ENCODE measurements at regions of chr4 and their contacts with region 1.

Region 1: DNA sequence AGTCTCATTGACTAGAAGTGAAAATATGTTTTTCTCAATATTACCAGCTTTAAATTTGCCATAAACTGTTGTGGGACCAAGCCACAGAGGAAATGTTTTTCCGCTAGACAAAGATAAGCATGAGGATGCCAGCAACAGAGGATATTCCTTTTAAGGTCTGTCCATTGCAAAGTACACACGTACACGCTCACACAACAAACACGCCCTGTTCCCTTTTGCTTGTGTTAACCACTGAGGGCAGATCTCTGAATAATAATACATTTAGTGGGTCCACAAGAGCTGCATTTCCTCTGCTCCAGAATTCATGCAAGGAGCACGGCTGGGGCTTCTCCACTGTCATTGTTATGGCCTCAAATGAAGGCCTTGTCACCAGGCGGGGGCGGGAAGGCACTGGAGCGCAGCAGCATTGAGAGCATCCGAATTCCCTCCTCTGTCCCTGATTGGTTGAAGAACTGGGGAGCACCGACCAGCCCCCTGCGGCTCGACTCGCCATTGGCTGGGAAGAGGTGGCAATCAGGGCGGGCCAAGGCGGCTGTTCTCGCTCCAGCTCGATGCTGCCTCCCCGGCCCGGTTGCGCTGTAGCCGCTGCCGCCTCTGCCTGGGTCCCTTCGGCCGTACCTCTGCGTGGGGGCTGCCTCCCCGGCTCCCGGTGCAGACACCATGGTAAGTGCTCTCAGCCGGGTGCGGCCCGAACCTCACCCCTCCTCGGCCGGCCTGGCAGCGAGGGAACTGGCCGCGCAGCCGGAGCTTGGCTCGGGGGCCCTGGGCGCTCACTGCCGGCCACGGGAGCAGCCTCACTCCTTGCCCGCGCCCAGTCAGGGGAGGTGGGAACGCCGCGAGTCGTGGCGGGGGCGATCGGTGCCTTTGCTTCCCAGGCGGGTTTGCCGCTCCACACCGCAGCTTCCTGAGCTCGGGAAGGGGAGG is at the start of gene GUCY1B1:
- DNase-seq: peak; percentile 44
- ATAC-seq: peak; percentile 96
- H3K4me3 ChIP-seq: 0 out of 2 replicates have a peak within 1 kb of the TSS, but pooled peaks have one; percentile 44
- H3K27ac ChIP-seq: no peak within 1 kb of the TSS
- H3K4me1 ChIP-seq: no peaks in the 10 kb centered on the region
- H3K27me3 ChIP-seq: peaks cover 0 to 7% of the 10 kb centered on the region in 2 experiments; a peak in 2 of 4 replicates
- CTCF ChIP-seq: peak; percentile 13 to 40 (median 24); a peak in 4 of 6 replicates
- EP300 ChIP-seq: 0 out of 4 replicates have a peak, but pooled peaks of 1 of the 2 experiments have one; percentile 13
- POLR2A ChIP-seq: peak; percentile 61; the same call in 1 of the 2 replicates
- RAD21 ChIP-seq: no peak
- polyA plus RNA-seq, gene GUCY1B1: 0.60 to 1.1 TPM

Region 2: DNA sequence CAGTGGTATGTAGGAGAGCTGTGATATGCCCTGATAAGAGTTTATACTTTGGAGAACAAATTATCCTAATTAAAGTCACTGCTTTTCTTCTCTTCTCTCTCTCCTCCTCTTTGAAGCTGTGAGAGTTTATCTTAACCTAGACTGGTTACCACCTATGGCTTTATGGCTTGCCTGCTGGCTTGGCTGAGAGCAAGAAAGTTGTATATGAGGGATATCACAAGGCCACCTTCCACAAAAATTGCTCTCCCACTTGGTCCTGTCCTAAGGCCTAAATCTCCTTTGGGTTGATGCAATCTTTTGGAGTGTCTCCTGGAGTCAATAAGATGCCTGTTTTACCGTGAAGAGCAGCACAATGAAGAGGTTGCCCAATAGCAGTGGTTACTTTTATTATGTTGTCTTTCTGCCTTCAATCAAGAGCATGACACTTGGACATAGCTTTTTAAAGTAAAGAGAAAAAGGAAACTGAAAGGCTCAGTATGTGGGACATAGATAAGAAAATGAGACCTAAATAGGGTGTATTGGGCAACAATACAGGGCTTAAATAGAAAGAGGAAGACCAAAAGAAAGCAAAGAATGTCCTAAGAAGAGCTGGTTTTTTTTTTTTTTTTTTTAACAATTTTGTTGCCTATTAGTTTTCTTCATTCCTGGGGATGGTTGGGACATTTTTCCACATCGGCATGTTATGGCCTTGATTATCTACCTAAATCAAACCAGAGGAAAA is 82.9 kb before region 1 on chr4:
- CTCF ChIA-PET with region 1: interaction called, 8 read pairs
- POLR2A ChIA-PET with region 1: interaction called, 10 read pairs
- RAD21 ChIA-PET with region 1: interaction called, 55 read pairs
- SMC1A ChIA-PET with region 1: interaction called, 8 read pairs
- in situ Hi-C with region 1: no loop called
- intact Hi-C with region 1: no loop called
- DNase-seq: no peak
- ATAC-seq: peak; percentile 86
- H3K4me3 ChIP-seq: no peak overlapping the region
- H3K27ac ChIP-seq: no peak overlapping the region
- H3K4me1 ChIP-seq: no peaks in the 10 kb centered on the region
- H3K27me3 ChIP-seq: no peaks in the 10 kb centered on the region
- CTCF ChIP-seq: no peak
- EP300 ChIP-seq: no peak
- POLR2A ChIP-seq: no peak
- RAD21 ChIP-seq: no peak

Region 3: DNA sequence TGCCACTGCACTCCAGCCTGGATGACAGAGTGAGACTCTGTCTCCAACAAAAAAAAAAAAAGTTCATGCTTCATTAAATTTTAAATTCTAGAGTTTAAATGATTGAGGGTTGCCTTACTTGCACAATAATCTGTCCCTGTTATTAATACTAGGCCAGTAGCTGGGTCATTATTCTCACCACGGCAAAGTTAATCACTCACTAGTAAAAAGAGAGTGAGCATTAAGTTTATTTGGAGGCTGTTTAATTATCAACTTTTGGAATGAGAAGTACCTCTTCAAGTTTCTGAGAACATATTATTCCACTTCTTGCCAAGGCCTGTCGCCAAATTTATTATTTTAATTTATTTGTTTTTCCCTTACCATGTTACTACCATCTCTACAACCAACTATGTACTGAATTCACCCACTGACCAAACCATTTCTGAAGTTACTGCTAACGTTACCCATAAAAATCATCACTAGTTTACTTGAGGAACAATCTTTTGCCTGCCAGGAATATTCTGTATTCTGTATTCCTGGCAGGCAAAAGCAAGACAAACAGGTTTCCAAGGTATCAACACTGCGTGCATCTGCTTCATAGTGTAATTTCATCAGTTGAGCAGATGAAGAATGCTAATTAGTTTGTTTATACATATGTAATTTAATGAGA is 65.6 kb before region 1 on chr4:
- CTCF ChIA-PET with region 1: interaction called, 3 read pairs
- POLR2A ChIA-PET with region 1: interaction called, 4 read pairs
- RAD21 ChIA-PET with region 1: interaction called, 14 read pairs
- SMC1A ChIA-PET with region 1: interaction called, 6 read pairs
- in situ Hi-C with region 1: no loop called
- intact Hi-C with region 1: no loop called
- DNase-seq: no peak
- ATAC-seq: peak; percentile 25; the same call in 2 of the 3 replicates
- H3K4me3 ChIP-seq: no peak overlapping the region
- H3K27ac ChIP-seq: no peak overlapping the region
- H3K4me1 ChIP-seq: no peaks in the 10 kb centered on the region
- H3K27me3 ChIP-seq: no peaks in the 10 kb centered on the region
- CTCF ChIP-seq: no peak
- EP300 ChIP-seq: no peak
- POLR2A ChIP-seq: no peak
- RAD21 ChIP-seq: no peak

Region 4: GRCh38 chr4:155734065-155734464 is 24.7 kb before region 1 on chr4:
- CTCF ChIA-PET with region 1: interaction called, 5 read pairs
- POLR2A ChIA-PET with region 1: no interaction called
- RAD21 ChIA-PET with region 1: interaction called, 11 read pairs
- SMC1A ChIA-PET with region 1: interaction called, 7 read pairs
- in situ Hi-C with region 1: no loop called
- intact Hi-C with region 1: no loop called
- DNase-seq: no peak
- ATAC-seq: no peak
- H3K4me3 ChIP-seq: no peak overlapping the region
- H3K27ac ChIP-seq: no peak overlapping the region
- H3K4me1 ChIP-seq: no peaks in the 10 kb centered on the region
- H3K27me3 ChIP-seq: no peaks in the 10 kb centered on the region
- CTCF ChIP-seq: no peak
- EP300 ChIP-seq: no peak
- POLR2A ChIP-seq: no peak
- RAD21 ChIP-seq: no peak

Region 5: GRCh38 chr4:155769090-155769489 is 10.3 kb after region 1 on chr4:
- CTCF ChIA-PET with region 1: interaction called, 9 read pairs
- POLR2A ChIA-PET with region 1: interaction called, 7 read pairs
- RAD21 ChIA-PET with region 1: interaction called, 10 read pairs
- SMC1A ChIA-PET with region 1: interaction called, 16 read pairs
- in situ Hi-C with region 1: no loop called
- intact Hi-C with region 1: no loop called
- DNase-seq: no peak
- ATAC-seq: peak; percentile 86
- H3K4me3 ChIP-seq: no peak overlapping the region
- H3K27ac ChIP-seq: no peak overlapping the region
- H3K4me1 ChIP-seq: no peaks in the 10 kb centered on the region
- H3K27me3 ChIP-seq: no peaks in the 10 kb centered on the region
- CTCF ChIP-seq: no peak
- EP300 ChIP-seq: no peak
- POLR2A ChIP-seq: no peak
- RAD21 ChIP-seq: no peak

Measured in GM12878 (cell line).